ENCODE measurements at regions of chr22 and their contacts with region 1.

Region 1: GRCh38 chr22:28829358-28830181 is 29.2 kb upstream of the XBP1 start:
- DNase-seq: peak; percentile 93
- H3K4me3 Mint-ChIP-seq: peak overlapping the region; percentile 34
- H3K27ac Mint-ChIP-seq: no peak overlapping the region
- H3K4me1 Mint-ChIP-seq: peaks cover 23% of the 10 kb centered on the region
- H3K27me3 Mint-ChIP-seq: no peaks in the 10 kb centered on the region

Region 2: GRCh38 chr22:28600546-28601143 is 228.9 kb before region 1 on chr22:
- intact Hi-C with region 1: loop called (anchors 1 kb)
- DNase-seq: peak; percentile 74
- H3K4me3 Mint-ChIP-seq: no peak overlapping the region
- H3K27ac Mint-ChIP-seq: no peak overlapping the region
- H3K4me1 Mint-ChIP-seq: no peaks in the 10 kb centered on the region
- H3K27me3 Mint-ChIP-seq: peaks cover 36% of the 10 kb centered on the region

Region 3: GRCh38 chr22:28790659-28791058 is 38.9 kb before region 1 on chr22:
- intact Hi-C with region 1: loop called (anchors 1 kb)
- DNase-seq: no peak
- H3K4me3 Mint-ChIP-seq: no peak overlapping the region
- H3K27ac Mint-ChIP-seq: no peak overlapping the region
- H3K4me1 Mint-ChIP-seq: peaks cover 41% of the 10 kb centered on the region
- H3K27me3 Mint-ChIP-seq: no peaks in the 10 kb centered on the region